Right ventricle myocardium superior (tissue), 1 donor: ENCODE measurements at regions of chr5 and their contacts with region 1.

Region 1: GRCh38 chr5:141349917-141350619 is at the start of gene PCDHGB1:
- DNase-seq: peak; percentile 55
- ATAC-seq: peak; percentile 82
- total RNA-seq, gene PCDHGB1: 7.8 TPM

Region 2: GRCh38 chr5:141412854-141413539 is 62.9 kb after region 1 on chr5 and contains the start of gene PCDHGA10:
- intact Hi-C with region 1: loop called (anchors 5 kb)
- DNase-seq: no peak
- ATAC-seq: peak; percentile 73
- total RNA-seq, gene PCDHGA10: 5.4 TPM